ENCODE measurements at regions of chr5 and their contacts with region 1.

Region 1: DNA sequence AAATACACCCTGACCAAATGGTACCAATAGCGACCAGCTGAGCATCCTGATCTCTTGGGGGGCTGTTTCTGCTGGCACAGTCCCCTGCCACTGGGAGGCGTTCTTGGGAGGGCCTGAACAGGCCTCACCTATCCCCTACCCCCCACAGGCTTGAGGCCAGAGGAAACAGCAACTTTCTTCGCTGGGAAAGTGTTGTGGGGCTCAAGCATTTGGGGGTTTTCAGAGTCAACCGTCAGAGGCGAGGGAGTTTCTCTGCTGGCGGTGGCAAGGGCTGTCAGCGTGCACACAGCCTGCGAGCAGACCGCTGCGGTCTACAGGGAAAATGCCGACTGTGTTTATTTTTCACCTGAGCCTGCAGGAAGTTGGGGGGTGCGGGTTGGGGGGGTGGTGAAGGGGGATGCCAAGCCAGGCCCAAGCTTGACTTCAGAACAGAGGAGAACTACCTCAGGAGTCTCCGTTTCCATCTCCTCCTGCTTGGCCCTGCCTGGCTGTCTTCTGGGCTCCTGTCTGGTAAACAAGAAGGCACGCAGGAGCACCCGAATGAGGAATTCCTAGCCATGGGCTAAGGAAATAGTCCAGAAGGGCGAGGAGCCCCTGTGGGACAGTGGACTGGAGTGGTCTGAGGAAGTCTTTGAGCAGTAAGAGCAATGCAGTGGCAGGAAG is 18.0 kb downstream of the TCF7 start:
- DNase-seq: peak; percentile 68 to 97 (median 78)
- ATAC-seq: peak; percentile 74
- H3K4me3 ChIP-seq: peak overlapping the region; percentile 92
- H3K4me3 Mint-ChIP-seq: peak overlapping the region; percentile 95
- H3K27ac ChIP-seq: peak overlapping the region; percentile 83 to 96
- H3K27ac Mint-ChIP-seq: peak overlapping the region; percentile 98
- H3K4me1 ChIP-seq: peaks cover 100% of the 10 kb centered on the region
- H3K4me1 Mint-ChIP-seq: peaks cover 100% of the 10 kb centered on the region
- H3K27me3 ChIP-seq: no peaks in the 10 kb centered on the region
- H3K27me3 Mint-ChIP-seq: no peaks in the 10 kb centered on the region
- CTCF ChIP-seq: peak; percentile 30

Region 2: GRCh38 chr5:133968049-133968980 is 164.2 kb before region 1 on chr5 and contains the start of gene C5orf15:
- CTCF ChIA-PET with region 1: no interaction called
- POLR2A ChIA-PET with region 1: no interaction called
- intact Hi-C with region 1: no loop called
- DNase-seq: peak; percentile 74 to 98 (median 89)
- ATAC-seq: peak; percentile 91
- H3K4me3 ChIP-seq: peak within 1 kb of the TSS; percentile 95
- H3K4me3 Mint-ChIP-seq: peak within 1 kb of the TSS; percentile 94
- H3K27ac ChIP-seq: peak within 1 kb of the TSS; percentile 82 to 86
- H3K27ac Mint-ChIP-seq: peak within 1 kb of the TSS; percentile 98
- H3K4me1 ChIP-seq: peaks cover 20% of the 10 kb centered on the region
- H3K4me1 Mint-ChIP-seq: peaks cover 57% of the 10 kb centered on the region
- H3K27me3 ChIP-seq: no peaks in the 10 kb centered on the region
- H3K27me3 Mint-ChIP-seq: no peaks in the 10 kb centered on the region
- CTCF ChIP-seq: no peak
- total RNA-seq, gene C5orf15: 12.3 to 15.5 TPM

Region 3: GRCh38 chr5:134086943-134087305 is 45.6 kb before region 1 on chr5:
- CTCF ChIA-PET with region 1: no interaction called
- POLR2A ChIA-PET with region 1: no interaction called
- intact Hi-C with region 1: loop called in 1 of 2 experiments (anchors 2 kb)
- DNase-seq: peak; percentile 62 to 92 (median 81)
- ATAC-seq: peak; percentile 74
- H3K4me3 ChIP-seq: no peak overlapping the region
- H3K4me3 Mint-ChIP-seq: peak overlapping the region; percentile 76
- H3K27ac ChIP-seq: peak overlapping the region; percentile 53 to 61
- H3K27ac Mint-ChIP-seq: peak overlapping the region; percentile 95
- H3K4me1 ChIP-seq: peaks cover 90% of the 10 kb centered on the region
- H3K4me1 Mint-ChIP-seq: peaks cover 88% of the 10 kb centered on the region
- H3K27me3 ChIP-seq: no peaks in the 10 kb centered on the region
- H3K27me3 Mint-ChIP-seq: no peaks in the 10 kb centered on the region
- CTCF ChIP-seq: no peak

Region 4: DNA sequence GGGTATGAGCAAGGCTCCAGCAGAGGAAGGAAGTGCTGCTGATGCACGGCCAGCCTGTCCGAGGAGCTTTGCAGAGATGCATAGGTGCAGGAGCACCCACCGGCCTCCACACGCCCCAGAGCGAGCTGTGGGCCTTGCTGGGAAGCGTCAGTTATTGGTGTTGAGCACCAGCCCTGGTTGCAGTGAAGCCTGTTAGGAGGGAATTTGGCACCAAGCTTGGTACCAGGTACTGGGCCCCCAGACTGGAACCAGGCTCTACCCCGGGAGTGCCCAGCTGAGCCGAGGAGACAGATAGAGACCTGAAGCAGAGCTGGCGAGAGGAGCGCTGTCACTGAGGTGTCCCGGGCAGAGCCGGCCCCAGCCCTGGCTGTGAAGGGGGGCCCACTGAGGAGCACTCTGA is 12.8 kb before region 1 on chr5:
- CTCF ChIA-PET with region 1: interaction called, 20 read pairs
- POLR2A ChIA-PET with region 1: no interaction called
- intact Hi-C with region 1: loop called (anchors 1 to 2 kb)
- DNase-seq: peak in 1 of 14 experiments; percentile 58
- ATAC-seq: no peak
- H3K4me3 ChIP-seq: peak overlapping the region; percentile 92
- H3K4me3 Mint-ChIP-seq: peak overlapping the region; percentile 95
- H3K27ac ChIP-seq: peak overlapping the region; percentile 49 to 96
- H3K27ac Mint-ChIP-seq: peak overlapping the region; percentile 98
- H3K4me1 ChIP-seq: peaks cover 76% of the 10 kb centered on the region
- H3K4me1 Mint-ChIP-seq: peaks cover 66% of the 10 kb centered on the region
- H3K27me3 ChIP-seq: no peaks in the 10 kb centered on the region
- H3K27me3 Mint-ChIP-seq: no peaks in the 10 kb centered on the region
- CTCF ChIP-seq: no peak

Region 5: DNA sequence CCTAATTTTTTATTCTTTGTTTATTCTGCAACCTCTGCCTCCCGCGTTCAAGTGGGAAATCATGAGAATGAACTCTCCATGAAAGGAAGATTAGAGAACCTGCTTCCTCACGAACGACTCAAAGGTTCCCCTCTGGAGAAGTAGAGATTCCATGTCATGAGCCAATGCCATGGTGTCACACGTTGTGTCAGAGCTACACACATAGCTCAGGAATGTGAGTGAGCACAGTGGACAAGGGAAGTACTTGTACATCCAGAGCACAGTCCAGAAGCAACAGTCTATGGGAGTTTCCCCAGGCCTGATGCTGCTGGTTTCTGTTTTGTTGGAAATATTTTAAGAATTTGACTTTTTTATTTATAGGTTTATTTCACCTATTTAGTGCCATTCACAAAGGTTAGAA is 120.2 kb after region 1 on chr5:
- CTCF ChIA-PET with region 1: no interaction called
- POLR2A ChIA-PET with region 1: no interaction called
- intact Hi-C with region 1: no loop called
- DNase-seq: peak in 1 of 14 experiments; percentile 10
- ATAC-seq: no peak
- H3K4me3 ChIP-seq: no peak overlapping the region
- H3K4me3 Mint-ChIP-seq: no peak overlapping the region
- H3K27ac ChIP-seq: no peak overlapping the region
- H3K27ac Mint-ChIP-seq: no peak overlapping the region
- H3K4me1 ChIP-seq: no peaks in the 10 kb centered on the region
- H3K4me1 Mint-ChIP-seq: no peaks in the 10 kb centered on the region
- H3K27me3 ChIP-seq: no peaks in the 10 kb centered on the region
- H3K27me3 Mint-ChIP-seq: peaks cover 6% of the 10 kb centered on the region
- CTCF ChIP-seq: no peak